ENCODE measurements at regions of chr7 and their contacts with region 1.

Region 1: GRCh38 chr7:155344600-155345433 is 47.1 kb downstream of the INSIG1 start:
- DNase-seq: peak; percentile 89
- CTCF ChIP-seq: peak; percentile 77

Region 2: DNA sequence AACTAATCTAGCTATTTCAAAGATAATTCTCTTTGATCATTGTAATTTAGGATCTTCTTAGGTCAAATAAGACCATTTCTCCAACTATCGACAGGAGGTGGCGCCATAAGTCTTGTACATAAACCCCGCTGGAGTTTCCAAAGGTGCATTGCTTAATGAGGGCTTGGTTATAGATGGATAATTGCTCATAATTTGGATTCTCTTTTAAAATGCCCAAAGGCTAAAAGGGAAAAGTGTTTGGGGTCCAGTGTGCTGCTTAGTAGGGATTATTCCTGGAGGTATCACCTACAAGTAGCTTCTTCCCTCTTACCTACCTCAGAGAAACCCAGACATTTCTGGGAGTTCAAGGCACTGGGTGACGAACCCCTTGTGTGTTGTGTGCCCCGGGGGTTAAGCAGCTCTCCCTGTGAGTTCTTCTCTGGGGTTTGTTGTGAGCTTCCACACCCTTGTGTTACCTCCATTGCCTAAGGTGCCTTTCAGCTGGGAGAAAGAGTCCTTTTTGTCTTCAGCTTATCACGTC is 417.1 kb before region 1 on chr7:
- CTCF ChIA-PET with region 1: interaction called, 44 read pairs
- POLR2A ChIA-PET with region 1: no interaction called
- DNase-seq: peak; percentile 49
- CTCF ChIP-seq: peak; percentile 72

Region 3: GRCh38 chr7:155190688-155191087 is 154.1 kb before region 1 on chr7:
- CTCF ChIA-PET with region 1: interaction called, 26 read pairs
- POLR2A ChIA-PET with region 1: no interaction called
- DNase-seq: peak; percentile 84
- CTCF ChIP-seq: peak; percentile 92

Region 4: DNA sequence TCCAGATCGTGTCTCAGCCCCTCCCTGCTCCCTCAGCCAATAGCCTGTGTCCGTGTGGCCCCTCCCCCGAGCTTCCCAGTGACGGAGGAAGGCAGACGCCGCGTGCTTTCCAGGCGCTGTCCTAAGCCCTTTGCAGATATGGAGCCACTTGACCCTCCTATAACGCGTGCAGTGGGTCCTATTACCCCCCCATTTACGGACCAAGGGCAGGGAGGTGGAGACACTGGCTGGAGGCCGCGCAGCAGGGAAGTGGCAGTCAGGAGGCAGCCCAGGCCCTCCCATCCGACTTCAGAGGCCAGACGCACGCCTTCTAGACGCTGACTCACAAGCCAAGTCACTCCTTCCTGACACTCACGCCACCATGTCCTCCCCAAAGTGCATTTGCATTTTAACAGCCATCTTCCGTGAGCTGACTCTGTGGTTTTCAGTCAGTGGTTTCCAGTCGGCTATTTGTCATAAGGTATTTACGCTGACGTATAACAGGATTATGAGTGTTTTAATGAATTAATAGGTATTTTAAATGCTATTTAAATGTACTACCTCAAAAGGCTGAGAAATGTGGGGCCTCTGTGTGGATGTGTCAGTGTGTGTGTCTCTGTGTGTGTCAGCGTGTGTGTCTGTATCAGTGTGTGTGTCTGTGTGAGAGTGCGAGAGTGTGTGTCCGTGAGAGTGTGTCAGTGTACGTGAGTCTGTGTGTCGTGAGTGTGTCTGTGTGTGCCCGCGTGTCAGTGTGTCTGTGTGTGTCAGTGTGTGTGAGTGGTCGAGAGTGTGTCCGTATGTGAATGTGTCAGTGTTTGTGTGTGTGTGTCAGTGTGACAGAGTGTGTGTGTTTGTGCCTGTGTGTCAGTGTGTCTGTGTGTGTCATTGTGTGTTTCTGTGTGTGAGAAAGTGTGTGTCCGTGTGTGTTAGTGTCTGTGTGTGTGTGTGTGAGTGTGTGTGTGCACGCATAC is 139.2 kb before region 1 on chr7:
- CTCF ChIA-PET with region 1: interaction called, 18 read pairs
- POLR2A ChIA-PET with region 1: no interaction called
- DNase-seq: peak; percentile 91
- CTCF ChIP-seq: no peak

Region 5: GRCh38 chr7:155326385-155326784 is 18.4 kb before region 1 on chr7:
- CTCF ChIA-PET with region 1: interaction called, 10 read pairs
- POLR2A ChIA-PET with region 1: no interaction called
- DNase-seq: no peak
- CTCF ChIP-seq: no peak

Region 6: GRCh38 chr7:155356323-155357105 is 11.7 kb after region 1 on chr7:
- CTCF ChIA-PET with region 1: interaction called, 15 read pairs
- POLR2A ChIA-PET with region 1: no interaction called
- DNase-seq: no peak
- CTCF ChIP-seq: peak; percentile 9